ENCODE measurements at regions of chr7 and their contacts with region 1.

Region 1: DNA sequence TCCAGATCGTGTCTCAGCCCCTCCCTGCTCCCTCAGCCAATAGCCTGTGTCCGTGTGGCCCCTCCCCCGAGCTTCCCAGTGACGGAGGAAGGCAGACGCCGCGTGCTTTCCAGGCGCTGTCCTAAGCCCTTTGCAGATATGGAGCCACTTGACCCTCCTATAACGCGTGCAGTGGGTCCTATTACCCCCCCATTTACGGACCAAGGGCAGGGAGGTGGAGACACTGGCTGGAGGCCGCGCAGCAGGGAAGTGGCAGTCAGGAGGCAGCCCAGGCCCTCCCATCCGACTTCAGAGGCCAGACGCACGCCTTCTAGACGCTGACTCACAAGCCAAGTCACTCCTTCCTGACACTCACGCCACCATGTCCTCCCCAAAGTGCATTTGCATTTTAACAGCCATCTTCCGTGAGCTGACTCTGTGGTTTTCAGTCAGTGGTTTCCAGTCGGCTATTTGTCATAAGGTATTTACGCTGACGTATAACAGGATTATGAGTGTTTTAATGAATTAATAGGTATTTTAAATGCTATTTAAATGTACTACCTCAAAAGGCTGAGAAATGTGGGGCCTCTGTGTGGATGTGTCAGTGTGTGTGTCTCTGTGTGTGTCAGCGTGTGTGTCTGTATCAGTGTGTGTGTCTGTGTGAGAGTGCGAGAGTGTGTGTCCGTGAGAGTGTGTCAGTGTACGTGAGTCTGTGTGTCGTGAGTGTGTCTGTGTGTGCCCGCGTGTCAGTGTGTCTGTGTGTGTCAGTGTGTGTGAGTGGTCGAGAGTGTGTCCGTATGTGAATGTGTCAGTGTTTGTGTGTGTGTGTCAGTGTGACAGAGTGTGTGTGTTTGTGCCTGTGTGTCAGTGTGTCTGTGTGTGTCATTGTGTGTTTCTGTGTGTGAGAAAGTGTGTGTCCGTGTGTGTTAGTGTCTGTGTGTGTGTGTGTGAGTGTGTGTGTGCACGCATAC is 92.0 kb upstream of the INSIG1 start:
- DNase-seq: peak; percentile 75
- ATAC-seq: peak; percentile 81
- H3K4me3 Mint-ChIP-seq: peak overlapping the region; percentile 82
- H3K27ac Mint-ChIP-seq: peak overlapping the region; percentile 97
- H3K4me1 Mint-ChIP-seq: peaks cover 32% of the 10 kb centered on the region
- H3K27me3 Mint-ChIP-seq: no peaks in the 10 kb centered on the region
- CTCF ChIP-seq: no peak

Region 2: DNA sequence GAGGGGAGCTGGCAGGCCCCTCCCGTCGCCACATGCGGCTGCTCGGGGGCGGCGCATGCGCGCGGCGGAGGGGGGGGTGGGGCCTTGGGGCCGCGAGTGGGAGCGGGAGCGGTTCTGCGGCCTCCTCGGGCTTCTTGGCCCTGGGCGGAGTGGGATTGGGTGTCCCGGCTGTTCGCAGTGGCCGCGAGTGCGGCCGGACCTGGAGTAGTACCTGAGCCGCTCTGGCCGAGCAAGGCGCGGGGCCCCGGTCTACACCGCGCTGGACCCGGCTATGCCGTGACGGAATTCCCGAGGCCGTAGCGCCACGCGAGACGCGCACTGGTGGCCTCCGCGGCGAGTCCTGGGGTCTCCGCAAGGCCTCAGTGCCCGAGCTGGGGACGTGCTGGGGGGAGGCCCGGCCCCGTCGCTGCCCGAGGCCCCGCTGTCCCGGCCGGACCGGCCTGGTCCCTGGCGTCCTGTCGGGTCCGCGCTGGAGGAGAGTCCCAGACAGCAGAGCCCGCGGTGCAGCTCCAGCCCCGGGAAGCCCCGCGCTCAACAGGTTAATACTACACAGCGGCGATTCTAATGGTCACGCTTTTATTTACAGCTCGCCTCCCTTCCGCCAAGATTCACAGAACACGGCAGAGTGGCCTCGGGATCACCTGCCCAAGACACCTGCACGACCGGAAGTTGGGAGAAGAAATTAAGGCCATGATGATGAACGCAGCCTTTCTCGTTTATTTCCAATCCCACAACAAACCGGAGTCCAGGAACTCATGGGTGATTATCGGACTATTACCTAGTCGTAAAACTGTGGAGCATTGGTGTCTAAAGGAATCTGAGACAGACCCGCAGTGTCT is 202.0 kb before region 1 on chr7:
- CTCF ChIA-PET with region 1: no interaction called
- POLR2A ChIA-PET with region 1: interaction called, 5 read pairs
- intact Hi-C with region 1: loop called (anchors 1 kb)
- DNase-seq: no peak
- ATAC-seq: peak; percentile 86
- H3K4me3 Mint-ChIP-seq: peak overlapping the region; percentile 92
- H3K27ac Mint-ChIP-seq: peak overlapping the region; percentile 83
- H3K4me1 Mint-ChIP-seq: peaks cover 19% of the 10 kb centered on the region
- H3K27me3 Mint-ChIP-seq: no peaks in the 10 kb centered on the region
- CTCF ChIP-seq: no peak

Region 3: GRCh38 chr7:155190688-155191087 is 15.0 kb before region 1 on chr7:
- CTCF ChIA-PET with region 1: interaction called, 7 read pairs
- POLR2A ChIA-PET with region 1: interaction called, 5 read pairs
- intact Hi-C with region 1: loop called (anchors 1 kb)
- DNase-seq: peak; percentile 70
- ATAC-seq: peak; percentile 94
- H3K4me3 Mint-ChIP-seq: no peak overlapping the region
- H3K27ac Mint-ChIP-seq: no peak overlapping the region
- H3K4me1 Mint-ChIP-seq: peaks cover 8% of the 10 kb centered on the region
- H3K27me3 Mint-ChIP-seq: peaks cover 7% of the 10 kb centered on the region
- CTCF ChIP-seq: no peak

Region 4: GRCh38 chr7:155344600-155345433 is 139.2 kb after region 1 on chr7:
- CTCF ChIA-PET with region 1: interaction called, 8 read pairs
- POLR2A ChIA-PET with region 1: interaction called, 27 read pairs
- intact Hi-C with region 1: loop called (anchors 1 kb)
- DNase-seq: peak; percentile 87
- ATAC-seq: peak; percentile 77
- H3K4me3 Mint-ChIP-seq: peak overlapping the region; percentile 79
- H3K27ac Mint-ChIP-seq: no peak overlapping the region
- H3K4me1 Mint-ChIP-seq: peaks cover 13% of the 10 kb centered on the region
- H3K27me3 Mint-ChIP-seq: no peaks in the 10 kb centered on the region
- CTCF ChIP-seq: peak; percentile 77

Region 5: GRCh38 chr7:155644178-155644970 is 438.7 kb after region 1 on chr7 and contains the start of gene RBM33:
- CTCF ChIA-PET with region 1: no interaction called
- POLR2A ChIA-PET with region 1: interaction called, 3 read pairs
- intact Hi-C with region 1: loop called (anchors 1 kb)
- DNase-seq: peak; percentile 86
- ATAC-seq: peak; percentile 74
- H3K4me3 Mint-ChIP-seq: peak within 1 kb of the TSS; percentile 98
- H3K27ac Mint-ChIP-seq: peak within 1 kb of the TSS; percentile 98
- H3K4me1 Mint-ChIP-seq: peaks cover 47% of the 10 kb centered on the region
- H3K27me3 Mint-ChIP-seq: no peaks in the 10 kb centered on the region
- CTCF ChIP-seq: no peak
- total RNA-seq, gene RBM33: 107 and 117 TPM in 2 replicates

Region 6: DNA sequence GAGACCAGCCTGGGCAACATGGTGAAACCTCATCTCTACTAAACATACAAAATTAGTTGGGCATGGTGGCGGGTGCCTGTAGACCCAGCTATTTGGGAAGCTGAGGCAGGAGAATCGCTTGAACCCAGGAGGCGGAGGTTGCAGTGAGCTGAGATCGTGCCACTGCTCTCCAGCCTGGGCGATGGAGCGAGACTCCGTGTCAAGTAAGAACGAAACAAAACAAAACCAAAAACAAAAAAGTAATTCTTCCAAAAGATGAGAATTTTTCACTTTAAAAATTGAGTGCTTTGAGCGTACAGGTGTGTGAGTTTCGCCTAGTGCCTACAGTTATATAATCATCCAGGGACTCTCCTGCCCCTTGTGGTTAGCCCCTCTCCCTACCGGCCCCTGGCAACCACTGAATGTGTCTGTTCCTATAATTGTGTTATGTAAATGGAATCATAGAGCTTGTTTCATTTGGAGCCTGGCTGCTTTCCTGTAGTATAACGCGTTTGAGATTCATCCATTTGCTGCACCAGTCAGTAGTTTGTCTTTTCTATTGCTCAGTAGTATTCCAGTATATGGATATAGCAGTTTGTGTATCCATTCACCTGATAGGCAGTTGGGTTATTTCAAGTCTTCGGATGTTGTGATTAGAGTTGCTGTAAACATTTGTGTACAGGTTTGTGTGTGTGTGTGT is 518.8 kb after region 1 on chr7:
- CTCF ChIA-PET with region 1: no interaction called
- POLR2A ChIA-PET with region 1: no interaction called
- intact Hi-C with region 1: loop called (anchors 5 kb)
- DNase-seq: no peak
- ATAC-seq: peak; percentile 41
- H3K4me3 Mint-ChIP-seq: peak overlapping the region; percentile 71
- H3K27ac Mint-ChIP-seq: peak overlapping the region; percentile 83
- H3K4me1 Mint-ChIP-seq: peaks cover 83% of the 10 kb centered on the region
- H3K27me3 Mint-ChIP-seq: no peaks in the 10 kb centered on the region
- CTCF ChIP-seq: no peak

Region 7: GRCh38 chr7:157138424-157139110 is 1932.9 kb after region 1 on chr7 and contains the start of gene UBE3C:
- CTCF ChIA-PET with region 1: no interaction called
- POLR2A ChIA-PET with region 1: no interaction called
- intact Hi-C with region 1: loop called (anchors 5 kb)
- DNase-seq: peak; percentile 91
- ATAC-seq: peak; percentile 89
- H3K4me3 Mint-ChIP-seq: peak within 1 kb of the TSS; percentile 81
- H3K27ac Mint-ChIP-seq: peak within 1 kb of the TSS; percentile 88
- H3K4me1 Mint-ChIP-seq: peaks cover 37% of the 10 kb centered on the region
- H3K27me3 Mint-ChIP-seq: no peaks in the 10 kb centered on the region
- CTCF ChIP-seq: no peak
- total RNA-seq, gene UBE3C: 52.8 and 65.3 TPM in 2 replicates

Measured in activated B cell treated with CpG ODN at 0.5 μM for 24 hours (primary cell).